AG04449 (cell line): ENCODE measurements at regions of chr11 and their contacts with region 1.

Region 1: DNA sequence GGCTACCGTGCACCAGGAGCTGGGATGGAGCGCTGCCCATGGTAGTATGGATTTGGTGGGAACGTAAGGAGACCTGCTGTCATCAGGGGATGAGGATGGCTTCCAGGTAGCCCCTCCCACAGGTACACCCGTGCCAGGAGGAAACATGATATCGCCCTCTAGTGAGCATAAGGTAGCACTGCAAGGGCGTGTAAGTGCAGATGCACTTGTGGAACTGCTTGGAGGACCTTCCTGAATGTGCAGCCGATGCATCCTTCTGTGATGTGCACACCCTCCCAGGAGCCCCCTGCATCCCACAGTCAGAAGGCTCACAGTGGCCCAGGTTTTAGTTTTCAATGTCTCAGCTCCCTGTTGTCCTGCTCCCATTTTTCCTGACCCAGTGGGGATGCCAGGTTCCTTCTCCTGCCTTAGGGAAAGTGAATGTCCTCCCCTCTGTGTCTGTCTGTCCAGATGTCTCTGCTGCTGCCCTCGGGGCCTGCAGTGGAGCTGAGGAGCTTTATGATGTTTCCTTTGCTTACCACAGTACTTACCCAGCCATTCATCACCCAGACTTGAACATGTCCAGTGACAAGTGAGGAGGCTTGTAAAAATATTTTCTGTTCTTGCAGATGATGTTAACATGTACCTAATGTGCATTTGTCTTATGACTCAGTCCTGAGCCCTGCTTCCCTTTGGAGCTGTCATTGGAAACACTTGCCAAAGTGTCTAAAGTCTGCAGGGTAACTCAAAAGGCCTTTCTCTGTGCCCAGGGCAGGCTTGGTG is 49.2 kb downstream of the DBX1 start:
- DNase-seq: peak; percentile 83
- H3K4me3 ChIP-seq: no peak overlapping the region
- CTCF ChIP-seq: peak; percentile 85

Region 2: DNA sequence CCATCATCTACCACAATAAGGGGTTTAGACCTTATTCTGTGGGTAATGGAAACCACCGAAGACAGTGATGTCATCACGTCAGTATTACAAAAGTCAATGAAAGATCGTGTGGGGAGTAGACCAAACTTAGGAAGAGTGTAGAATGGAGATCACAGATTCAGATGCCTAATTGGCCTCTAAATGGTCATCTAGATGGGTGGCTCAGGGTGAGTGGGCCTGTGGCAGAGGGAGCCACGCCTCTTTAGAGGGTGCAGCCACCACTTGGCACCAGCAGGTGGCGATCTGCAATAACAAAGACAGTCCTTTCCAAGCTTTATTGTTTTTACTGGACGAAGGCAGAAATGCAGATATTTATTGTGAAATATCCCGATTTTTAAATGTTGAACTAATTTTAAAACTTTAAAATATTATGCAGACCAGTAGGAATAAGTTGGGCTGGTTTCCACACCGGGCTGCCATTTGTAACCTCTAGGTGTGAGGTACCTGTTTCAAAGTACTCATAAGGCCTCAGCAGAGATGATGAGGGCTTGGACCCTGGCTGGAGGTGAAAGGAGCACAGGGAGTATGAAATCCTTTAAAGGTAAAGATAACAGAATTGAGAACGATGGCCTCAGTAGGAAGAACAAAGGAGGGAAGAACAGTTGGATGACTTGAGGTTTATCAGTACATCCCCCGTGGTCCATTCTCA is 172.8 kb before region 1 on chr11:
- CTCF ChIA-PET with region 1: interaction called, 32 read pairs
- POLR2A ChIA-PET with region 1: interaction called, 4 read pairs
- DNase-seq: no peak
- H3K4me3 ChIP-seq: no peak overlapping the region
- CTCF ChIP-seq: peak; percentile 65

Region 3: DNA sequence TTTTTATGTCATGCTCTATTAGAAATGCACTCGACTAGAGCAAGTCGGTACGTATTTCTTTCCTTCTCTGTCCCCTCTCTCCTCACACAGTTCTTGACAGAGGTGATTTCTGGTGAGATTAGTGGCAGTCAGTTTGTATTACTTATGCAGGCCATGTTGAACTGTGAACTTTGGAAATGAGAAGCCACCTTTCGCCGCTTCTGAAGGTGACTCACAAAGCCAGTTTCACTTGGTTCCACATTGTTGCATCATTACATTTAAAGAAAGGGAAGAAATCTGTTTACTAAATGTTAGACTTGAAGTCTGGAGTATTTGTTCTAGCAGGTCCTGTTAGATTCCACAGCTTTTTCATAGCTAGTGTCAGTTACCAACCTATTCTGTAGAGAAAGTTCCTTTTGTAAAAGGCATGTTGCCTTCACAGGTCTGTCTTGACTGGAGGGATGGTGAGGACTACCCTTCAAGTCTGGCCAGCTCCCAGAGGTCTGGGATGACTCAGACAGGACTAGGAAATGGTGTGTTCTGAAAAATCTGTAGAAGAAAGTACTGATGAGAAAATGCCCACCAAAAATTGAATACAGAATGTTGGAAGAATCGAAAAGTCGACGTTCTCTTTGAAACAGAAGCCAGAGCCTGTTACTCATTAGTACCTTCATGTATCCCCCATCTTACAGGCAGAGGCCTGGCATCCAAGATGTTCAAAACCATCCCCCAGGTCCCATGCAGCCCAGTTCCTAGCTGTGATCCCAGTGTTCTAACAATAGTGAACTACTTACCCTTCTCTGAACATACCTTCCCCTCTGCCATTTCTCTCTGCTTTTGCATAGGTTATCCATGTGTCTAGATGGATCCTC is 132.2 kb before region 1 on chr11:
- CTCF ChIA-PET with region 1: interaction called, 13 read pairs
- POLR2A ChIA-PET with region 1: no interaction called
- DNase-seq: peak; percentile 52
- H3K4me3 ChIP-seq: no peak overlapping the region
- CTCF ChIP-seq: no peak

Region 4: DNA sequence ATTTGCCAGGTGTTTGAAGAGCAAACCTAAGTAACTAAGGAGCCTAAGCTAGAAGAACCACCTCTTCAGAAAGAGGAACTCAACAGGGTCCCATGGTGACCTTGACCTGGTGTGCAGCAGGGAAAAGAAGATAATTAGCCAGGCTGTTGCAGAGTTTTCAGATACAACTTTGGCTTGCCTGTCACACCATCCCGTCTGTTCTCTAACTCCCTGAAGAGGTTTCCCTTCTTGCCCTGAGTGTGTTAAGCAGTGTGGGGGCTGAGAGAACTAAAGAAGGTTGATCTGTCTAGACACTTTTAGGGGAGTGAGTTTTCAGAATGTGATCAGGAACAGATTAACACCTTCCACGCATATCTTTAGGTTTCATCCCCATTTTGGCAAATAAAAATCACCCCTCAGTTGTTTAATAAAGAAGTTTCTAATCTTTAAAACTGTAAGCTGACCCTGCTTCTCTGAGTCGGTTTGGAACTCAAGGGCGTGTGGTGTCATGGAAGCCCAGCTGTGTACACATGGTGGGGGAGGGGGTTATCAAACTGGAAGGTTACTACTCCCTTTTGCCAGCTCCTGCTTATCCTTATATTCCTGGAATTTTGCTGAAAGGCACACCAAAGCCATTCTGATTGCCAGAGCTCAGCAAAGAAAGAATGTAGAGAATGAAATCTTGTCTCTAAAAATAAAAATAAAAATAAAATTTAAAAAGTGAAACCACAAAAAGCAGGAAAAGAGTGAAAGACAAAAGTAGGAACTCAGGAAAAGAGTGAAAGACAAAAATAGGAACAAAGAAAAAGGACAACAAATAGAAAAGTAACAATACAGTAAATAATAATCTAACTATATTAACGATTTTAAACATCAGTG is 21.1 kb before region 1 on chr11:
- CTCF ChIA-PET with region 1: interaction called, 52 read pairs
- POLR2A ChIA-PET with region 1: interaction called, 6 read pairs
- DNase-seq: no peak
- H3K4me3 ChIP-seq: no peak overlapping the region
- CTCF ChIP-seq: no peak

Region 5: DNA sequence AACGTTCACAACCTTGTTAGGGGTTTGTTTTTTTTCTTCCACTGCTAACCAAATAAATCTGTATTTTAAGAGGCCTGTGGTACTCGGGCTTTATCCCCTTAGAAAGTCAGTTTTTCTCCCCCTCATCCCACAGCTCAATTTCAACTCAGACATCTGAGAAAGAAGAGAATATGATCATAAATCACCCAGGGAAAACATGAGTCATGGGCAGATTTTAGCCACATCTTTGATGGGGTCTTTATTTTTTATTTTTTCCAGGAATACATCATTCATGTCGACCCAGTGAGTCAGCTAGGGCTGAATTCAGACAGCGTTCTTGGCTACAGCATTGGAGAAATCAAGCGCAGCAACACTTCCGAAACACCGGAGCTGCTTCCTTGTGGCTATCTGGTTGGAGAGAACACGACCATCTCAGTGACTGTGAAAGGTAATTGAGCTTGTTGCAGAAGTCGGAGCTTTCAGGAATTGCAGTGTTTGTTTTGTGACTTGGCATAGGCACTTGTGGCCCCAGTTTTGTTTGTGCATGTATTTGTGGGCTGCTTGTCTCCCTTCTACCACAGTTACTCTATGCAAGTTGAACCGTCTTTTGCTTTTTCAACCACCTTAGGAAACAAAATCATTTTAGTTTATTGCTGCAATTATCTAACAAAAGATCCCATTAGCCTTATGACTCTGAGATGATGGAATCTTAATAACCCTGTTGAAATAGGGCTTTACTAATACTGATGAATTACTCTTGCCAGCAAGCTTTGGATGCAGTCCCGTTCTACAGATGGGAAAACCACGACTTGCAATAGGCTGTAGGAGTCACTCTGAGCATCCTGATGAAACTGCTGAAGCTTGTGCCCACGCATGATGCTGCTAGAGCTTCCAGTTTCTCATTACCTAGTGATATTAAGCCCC is 13.5 kb before region 1 on chr11:
- CTCF ChIA-PET with region 1: interaction called, 121 read pairs
- POLR2A ChIA-PET with region 1: interaction called, 28 read pairs
- DNase-seq: peak; percentile 88
- H3K4me3 ChIP-seq: no peak overlapping the region
- CTCF ChIP-seq: no peak